HEK293T (cell line): ENCODE measurements at regions of chr10 and their contacts with region 1.

Region 1: GRCh38 chr10:3785257-3785850 is 345 bp upstream of the KLF6 start:
- DNase-seq: peak; percentile 97

Region 2: GRCh38 chr10:3197348-3198003 is 587.9 kb before region 1 on chr10:
- CTCF ChIA-PET with region 1: no interaction called
- POLR2A ChIA-PET with region 1: interaction called, 18 read pairs
- DNase-seq: peak; percentile 87

Region 3: GRCh38 chr10:3805791-3806461 is 20.6 kb after region 1 on chr10:
- CTCF ChIA-PET with region 1: no interaction called
- POLR2A ChIA-PET with region 1: interaction called, 41 read pairs
- DNase-seq: no peak

Region 4: DNA sequence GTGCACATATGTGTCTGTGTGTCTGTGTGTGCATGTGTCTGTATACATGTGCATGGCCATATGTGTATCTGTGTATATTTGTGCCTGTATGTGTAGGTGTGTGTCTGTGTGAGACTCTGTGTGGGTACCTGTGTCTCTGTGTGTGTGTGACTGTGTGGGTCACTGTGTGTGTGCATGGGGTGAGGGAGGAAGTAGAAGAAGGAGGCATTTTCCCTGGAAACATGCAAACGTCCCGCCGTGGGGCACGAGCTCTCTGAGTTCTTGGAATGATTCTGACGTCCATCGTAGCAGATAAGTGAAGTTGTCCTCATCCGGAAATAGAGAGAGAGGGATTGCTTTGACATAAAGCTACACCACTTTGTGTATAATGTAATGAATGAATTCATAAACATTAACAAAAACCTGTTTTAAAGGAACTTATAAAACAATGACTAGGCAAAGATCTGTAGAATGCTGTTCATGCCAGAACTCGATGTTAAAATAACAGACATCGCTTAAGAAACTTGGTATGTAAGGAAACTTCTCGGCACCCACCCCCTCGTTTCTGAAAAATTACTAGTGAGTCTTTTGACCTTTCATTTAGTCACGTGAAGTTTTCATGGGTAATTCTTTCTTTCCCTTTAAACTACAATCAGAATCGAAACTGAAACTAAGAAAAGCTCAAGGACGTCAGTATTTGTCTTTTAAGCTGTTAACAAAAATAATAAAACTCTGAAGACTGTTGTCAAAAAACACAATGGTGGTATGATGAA is 43.2 kb after region 1 on chr10:
- CTCF ChIA-PET with region 1: no interaction called
- POLR2A ChIA-PET with region 1: interaction called, 54 read pairs
- DNase-seq: no peak

Region 5: DNA sequence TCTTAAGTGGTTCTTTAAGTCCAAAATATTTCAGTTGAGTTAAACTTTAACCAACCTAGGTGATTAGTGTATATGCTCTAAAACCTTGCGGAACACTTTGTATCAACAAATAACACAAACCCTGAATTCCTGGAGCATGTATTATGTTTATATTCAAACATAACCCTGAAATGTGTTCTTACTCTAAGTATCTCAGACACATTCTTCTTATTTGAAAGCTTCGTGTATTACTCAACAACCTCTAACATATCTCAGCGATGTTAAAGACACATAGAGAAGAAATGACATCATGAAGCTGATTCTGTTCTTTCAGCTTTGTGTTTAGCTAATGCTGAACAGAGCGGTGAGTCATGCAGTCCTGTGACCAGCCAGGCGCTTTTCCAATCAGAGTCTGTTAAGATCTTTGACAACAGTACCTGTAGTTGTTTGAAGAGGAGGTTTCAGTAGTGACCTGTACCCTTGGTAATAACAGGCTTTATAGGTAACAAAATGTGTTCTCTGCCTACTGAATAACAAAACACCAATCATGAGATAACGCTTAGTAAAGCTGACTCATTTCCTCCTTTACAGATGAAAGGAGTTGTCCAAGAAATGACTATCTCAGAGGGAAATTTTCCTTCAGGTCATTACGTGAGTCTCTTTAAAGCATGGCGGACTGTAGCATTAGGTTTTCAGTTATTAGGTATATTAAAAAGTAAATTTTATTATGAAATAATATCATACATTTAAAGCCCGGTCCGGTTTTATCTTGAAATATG is 67.0 kb after region 1 on chr10:
- CTCF ChIA-PET with region 1: no interaction called
- POLR2A ChIA-PET with region 1: interaction called, 123 read pairs
- DNase-seq: peak; percentile 41

Region 6: DNA sequence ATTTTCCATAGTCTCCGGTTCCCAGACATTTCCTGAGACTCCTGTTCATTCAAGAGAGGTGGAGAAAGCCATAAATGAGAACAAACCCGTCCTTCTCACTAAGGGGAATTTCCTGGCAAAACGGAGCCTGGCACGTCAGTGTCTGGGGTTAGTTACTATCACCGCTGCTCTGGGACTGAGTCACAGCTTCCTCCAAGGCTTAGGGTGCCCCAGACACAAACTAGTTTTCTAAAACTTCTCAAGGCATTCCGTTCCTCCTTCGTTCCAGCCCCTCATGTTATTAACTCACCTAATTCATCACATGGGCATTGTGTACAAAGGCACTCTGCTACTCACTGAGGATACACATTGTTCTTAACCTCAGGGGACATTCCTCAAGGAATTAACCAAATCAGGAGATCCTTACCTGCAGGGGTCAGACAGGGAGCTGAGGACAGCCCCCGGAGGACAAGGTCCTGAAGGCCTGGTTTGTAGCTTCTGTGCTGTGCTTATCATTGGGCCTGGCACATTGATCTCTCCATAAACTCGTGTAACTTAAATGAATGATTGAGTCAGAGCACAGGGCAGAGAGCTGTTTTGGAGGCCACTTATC is 102.6 kb after region 1 on chr10:
- CTCF ChIA-PET with region 1: interaction called, 3 read pairs
- POLR2A ChIA-PET with region 1: interaction called, 39 read pairs
- DNase-seq: no peak